ENCODE measurements at regions of chr2 and their contacts with region 1.

Region 1: DNA sequence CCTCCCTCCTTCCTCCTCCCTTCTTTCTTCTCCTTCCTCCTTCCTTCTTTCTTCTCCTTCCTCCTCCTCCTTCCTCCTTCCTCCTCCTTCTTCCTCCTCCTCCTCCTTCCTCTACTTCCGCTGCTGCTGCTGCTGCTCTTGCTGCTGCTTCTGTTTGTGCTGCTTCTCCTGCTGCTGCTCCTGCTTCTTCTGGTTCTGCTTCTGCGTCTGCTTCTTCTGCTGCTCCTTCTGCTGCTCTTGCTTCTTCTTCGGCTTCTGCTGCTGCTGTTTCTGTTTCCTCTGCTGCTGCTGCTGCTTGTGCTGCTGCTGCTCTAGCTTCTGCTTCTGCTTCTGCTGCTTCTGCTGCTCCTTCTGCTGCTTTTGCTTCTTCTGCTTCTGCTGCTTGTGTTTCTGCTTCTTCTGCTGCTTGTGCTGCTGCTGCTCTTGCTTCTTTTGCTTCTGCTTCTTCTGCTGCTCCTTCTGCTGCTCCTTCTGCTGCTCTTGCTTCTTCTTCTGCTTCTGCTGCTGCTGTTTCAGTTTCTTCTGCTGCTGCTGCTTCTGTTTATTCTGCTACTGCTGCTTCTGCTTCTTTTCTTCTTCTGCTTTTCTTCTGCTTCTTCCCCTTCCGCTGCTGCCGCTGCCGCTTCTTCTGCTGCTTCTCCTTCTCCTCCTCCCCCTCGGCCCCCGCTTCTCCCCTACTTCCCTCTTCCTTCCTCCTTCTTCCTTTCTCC is 8.6 kb downstream of the SNRNP27 start:
- DNase-seq: peak; percentile 83 to 86 (median 85)
- H3K4me3 ChIP-seq: peak overlapping the region in 1 of 3 experiments; percentile 21
- H3K4me3 Mint-ChIP-seq: peak overlapping the region in 1 of 2 donors; percentile 28
- H3K27ac ChIP-seq: peak overlapping the region; percentile 70 to 84
- H3K27ac Mint-ChIP-seq: peak overlapping the region; percentile 63 to 96 (median 89)
- H3K4me1 ChIP-seq: peaks cover 18 to 31% of the 10 kb centered on the region in 2 donors
- H3K4me1 Mint-ChIP-seq: peaks cover 33% of the 10 kb centered on the region
- H3K27me3 ChIP-seq: no peaks in the 10 kb centered on the region
- H3K27me3 Mint-ChIP-seq: no peaks in the 10 kb centered on the region
- CTCF ChIP-seq: no peak

Region 2: GRCh38 chr2:70248181-70248847 is 345.9 kb after region 1 on chr2 and contains the start of gene TIA1:
- intact Hi-C with region 1: loop called in 1 of 2 experiments (anchors 10 kb)
- DNase-seq: peak; percentile 98 to 100 (median 99)
- H3K4me3 ChIP-seq: peak within 1 kb of the TSS; percentile 80 to 99 (median 97)
- H3K4me3 Mint-ChIP-seq: peak within 1 kb of the TSS; percentile 97 to 100
- H3K27ac ChIP-seq: peak within 1 kb of the TSS; percentile 95 to 98
- H3K27ac Mint-ChIP-seq: peak within 1 kb of the TSS; percentile 95 to 99 (median 98)
- H3K4me1 ChIP-seq: peaks cover 16 to 22% of the 10 kb centered on the region in 2 donors
- H3K4me1 Mint-ChIP-seq: peaks cover 31% of the 10 kb centered on the region
- H3K27me3 ChIP-seq: no peaks in the 10 kb centered on the region
- H3K27me3 Mint-ChIP-seq: peaks cover 0 to 3% (median 0%) of the 10 kb centered on the region in 3 donors
- CTCF ChIP-seq: no peak
- polyA plus RNA-seq, gene TIA1: 47.0 to 61.9 (median 48.7) TPM

Measured in CD14-positive monocyte (primary cell).